Aorta (tissue), 5 donors: ENCODE measurements at regions of chr10 and their contacts with region 1.

Region 1: DNA sequence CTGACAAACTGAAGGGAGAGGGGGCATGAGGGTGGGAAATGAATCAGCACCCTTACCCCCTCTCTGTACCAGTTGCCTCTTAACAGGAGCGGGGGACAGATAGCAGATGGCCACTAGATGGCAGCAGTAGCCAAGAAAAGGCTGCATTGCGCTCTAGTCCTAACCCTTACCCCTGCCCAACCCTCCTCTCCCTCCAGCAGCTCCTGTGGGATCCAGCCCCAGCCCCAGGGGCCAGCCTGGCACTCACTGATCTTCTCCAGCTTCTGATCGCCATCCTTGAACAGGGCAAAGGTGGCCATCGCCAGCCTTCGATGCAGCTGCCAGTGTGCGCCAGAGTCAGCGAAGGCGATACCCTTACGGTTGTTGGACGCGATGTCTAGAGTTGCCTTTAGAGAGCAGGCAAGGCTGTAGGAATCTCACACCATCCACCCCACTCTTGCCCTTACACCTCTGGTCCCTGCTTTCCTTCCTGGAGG is 2.2 kb downstream of the CYP17A1 start:
- DNase-seq: peak; percentile 76 to 87
- ATAC-seq: peak; percentile 91
- H3K4me3 ChIP-seq: no peak overlapping the region
- H3K27ac ChIP-seq: no peak overlapping the region
- H3K4me1 ChIP-seq: no peaks in the 10 kb centered on the region
- H3K27me3 ChIP-seq: no peaks in the 10 kb centered on the region

Region 2: GRCh38 chr10:102729029-102730026 is 105.7 kb before region 1 on chr10:
- intact Hi-C with region 1: loop called in 1 of 2 experiments (anchors 5 kb)
- DNase-seq: peak; percentile 93 to 98
- ATAC-seq: peak; percentile 94
- H3K4me3 ChIP-seq: no peak overlapping the region
- H3K27ac ChIP-seq: no peak overlapping the region
- H3K4me1 ChIP-seq: no peaks in the 10 kb centered on the region
- H3K27me3 ChIP-seq: no peaks in the 10 kb centered on the region

Region 3: GRCh38 chr10:102739873-102740628 is 95.0 kb before region 1 on chr10:
- intact Hi-C with region 1: no loop called
- DNase-seq: no peak
- ATAC-seq: no peak
- H3K4me3 ChIP-seq: no peak overlapping the region
- H3K27ac ChIP-seq: peak overlapping the region; percentile 20 to 33
- H3K4me1 ChIP-seq: peaks cover 0 to 3% of the 10 kb centered on the region in 2 donors
- H3K27me3 ChIP-seq: no peaks in the 10 kb centered on the region

Region 4: DNA sequence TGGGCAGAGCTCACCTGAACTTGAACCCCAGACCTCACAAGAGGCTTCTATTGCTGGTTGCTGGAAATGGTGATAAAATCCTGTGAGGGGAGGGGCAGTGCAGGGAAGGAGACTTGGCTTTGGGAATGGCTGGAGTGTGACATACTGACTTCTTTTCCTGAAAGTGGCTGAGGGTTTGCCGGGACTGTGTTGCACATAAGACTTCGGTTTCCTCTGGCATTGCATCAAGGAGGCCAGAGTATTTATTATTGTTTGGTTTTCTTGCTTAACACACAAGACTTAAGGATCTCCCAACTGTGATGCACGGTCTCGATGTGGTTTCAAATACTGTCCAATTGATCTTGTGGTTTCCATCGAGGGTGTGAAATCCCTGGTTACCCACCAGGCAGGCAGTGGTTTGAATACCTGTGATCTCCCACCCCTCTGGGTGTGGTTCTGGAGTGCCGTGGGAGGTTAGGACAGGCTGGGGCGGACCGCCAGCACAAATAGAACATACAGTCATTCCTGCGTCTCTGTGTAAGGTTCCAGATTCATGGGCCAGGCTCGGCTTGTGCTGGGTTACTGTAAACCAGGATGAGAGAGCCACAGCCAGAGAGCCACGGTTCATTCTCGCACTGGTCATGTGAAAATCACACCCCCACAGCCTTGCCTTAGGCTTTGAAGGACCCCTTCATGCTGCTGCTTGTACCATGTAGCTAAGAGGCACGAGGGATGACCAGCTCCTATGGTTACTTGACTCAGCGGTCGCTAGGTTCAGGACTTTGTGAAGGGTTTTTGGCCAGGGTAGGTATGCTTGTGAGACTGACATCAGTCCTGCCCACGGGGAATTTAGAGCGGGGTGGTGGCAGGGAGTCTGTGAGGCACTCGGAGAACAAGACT is 52.1 kb before region 1 on chr10:
- intact Hi-C with region 1: no loop called
- DNase-seq: peak; percentile 88 to 91
- ATAC-seq: peak; percentile 83
- H3K4me3 ChIP-seq: no peak overlapping the region
- H3K27ac ChIP-seq: peak overlapping the region; percentile 95 to 96
- H3K4me1 ChIP-seq: peaks cover 7 to 13% of the 10 kb centered on the region in 2 donors
- H3K27me3 ChIP-seq: no peaks in the 10 kb centered on the region

Region 5: DNA sequence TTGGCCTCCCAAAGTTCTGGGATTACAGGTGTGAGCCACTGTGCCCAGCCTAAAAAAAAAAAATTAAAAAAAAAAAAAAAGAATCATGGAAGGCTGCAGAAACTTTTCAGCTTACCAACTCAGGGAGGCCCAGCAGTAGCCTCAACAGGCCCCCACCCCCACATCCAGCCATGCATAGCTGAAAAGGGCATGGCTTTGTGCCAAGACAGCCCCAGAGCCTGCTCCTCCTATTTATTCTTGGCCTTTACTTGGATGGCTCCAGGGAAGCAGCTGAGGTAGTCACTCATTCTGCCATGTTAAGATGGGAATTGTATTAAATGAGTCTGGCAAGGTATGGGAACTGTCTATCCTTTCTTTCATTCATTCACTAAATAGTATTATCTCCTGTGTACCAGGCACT is 69.3 kb after region 1 on chr10:
- intact Hi-C with region 1: loop called (anchors 5 kb)
- DNase-seq: no peak
- ATAC-seq: no peak
- H3K4me3 ChIP-seq: no peak overlapping the region
- H3K27ac ChIP-seq: no peak overlapping the region
- H3K4me1 ChIP-seq: no peaks in the 10 kb centered on the region
- H3K27me3 ChIP-seq: no peaks in the 10 kb centered on the region

Region 6: DNA sequence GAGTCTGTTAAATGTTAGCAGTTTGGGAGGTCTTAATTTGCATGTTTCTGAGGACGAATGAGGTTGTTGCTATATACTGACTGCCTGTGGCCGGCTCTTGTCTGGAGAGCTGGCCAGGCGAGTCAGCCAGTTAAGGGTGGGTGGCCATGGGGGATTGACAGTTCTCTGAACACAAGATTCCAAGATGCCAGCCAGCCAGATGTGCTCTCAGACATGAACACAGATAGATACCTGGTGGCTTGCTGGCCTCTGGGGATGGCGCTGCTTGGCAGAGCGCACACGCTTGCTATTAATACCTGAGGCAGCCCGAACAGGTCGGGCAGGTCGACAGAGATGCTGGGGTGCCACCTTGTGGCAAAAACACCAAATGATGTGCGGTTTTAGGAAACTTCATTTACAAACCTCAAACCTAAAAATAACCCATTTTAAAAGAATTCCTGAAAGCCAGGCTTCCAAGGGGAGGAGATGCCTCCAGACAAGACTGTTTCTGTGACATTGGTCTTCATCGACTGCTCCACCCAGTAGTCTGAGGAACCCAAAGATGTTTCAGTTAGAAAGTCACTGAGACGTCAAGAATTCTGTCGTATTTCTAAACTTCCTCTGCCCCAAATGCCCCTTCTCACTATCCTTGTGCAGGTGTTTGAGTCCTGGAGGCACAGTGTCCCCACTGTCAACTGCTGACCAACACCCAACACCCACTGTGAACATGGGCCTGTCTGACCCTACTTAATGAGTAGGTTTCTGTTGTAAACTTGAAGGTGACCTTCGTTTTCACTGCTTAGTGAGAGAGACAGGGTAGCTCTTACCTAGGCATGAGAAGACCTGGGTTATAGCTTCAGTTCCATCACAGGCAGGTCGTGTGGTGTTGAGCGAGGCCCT is 234.6 kb after region 1 on chr10:
- intact Hi-C with region 1: loop called in 1 of 2 experiments (anchors 10 kb)
- DNase-seq: peak in 1 of 2 donors; percentile 69
- ATAC-seq: peak; percentile 51
- H3K4me3 ChIP-seq: no peak overlapping the region
- H3K27ac ChIP-seq: no peak overlapping the region
- H3K4me1 ChIP-seq: no peaks in the 10 kb centered on the region
- H3K27me3 ChIP-seq: no peaks in the 10 kb centered on the region

Region 7: GRCh38 chr10:103244663-103245271 is 409.7 kb after region 1 on chr10:
- intact Hi-C with region 1: loop called in 1 of 2 experiments (anchors 10 kb)
- DNase-seq: peak; percentile 77 to 81
- ATAC-seq: peak; percentile 91
- H3K4me3 ChIP-seq: no peak overlapping the region
- H3K27ac ChIP-seq: no peak overlapping the region
- H3K4me1 ChIP-seq: peaks cover 0 to 7% of the 10 kb centered on the region in 2 donors
- H3K27me3 ChIP-seq: no peaks in the 10 kb centered on the region

Region 8: DNA sequence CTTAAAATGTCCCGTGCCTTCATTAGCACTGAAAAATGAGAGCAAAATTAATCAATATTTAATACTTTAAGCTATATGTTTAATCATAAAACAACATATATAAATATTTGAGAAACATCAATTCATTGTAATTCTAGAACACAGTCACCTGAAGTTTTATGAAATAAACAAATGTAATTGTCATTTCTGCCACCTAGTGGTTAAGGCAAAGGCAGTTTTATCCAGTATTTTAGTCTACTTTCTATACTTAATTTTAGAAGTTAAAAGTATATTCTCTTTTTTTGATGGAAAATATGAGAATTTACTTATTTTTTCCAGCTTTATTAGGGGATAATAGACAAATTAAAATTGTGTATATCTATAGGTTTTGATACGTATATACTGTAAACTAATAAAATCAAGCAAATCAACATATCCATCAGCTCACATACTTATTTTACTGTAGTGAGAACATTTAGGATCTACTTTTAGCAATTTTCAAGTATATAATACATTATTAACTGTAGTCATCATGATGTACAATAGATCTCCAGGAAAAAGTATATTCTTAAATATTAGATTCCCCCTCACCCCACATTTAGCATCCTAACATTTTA is 499.0 kb after region 1 on chr10:
- intact Hi-C with region 1: loop called in 1 of 2 experiments (anchors 10 kb)
- DNase-seq: no peak
- ATAC-seq: no peak
- H3K4me3 ChIP-seq: no peak overlapping the region
- H3K27ac ChIP-seq: no peak overlapping the region
- H3K4me1 ChIP-seq: no peaks in the 10 kb centered on the region
- H3K27me3 ChIP-seq: no peaks in the 10 kb centered on the region